GM10248 (cell line): ENCODE measurements at regions of chr2 and their contacts with region 1.

Region 1: GRCh38 chr2:11904029-11904428 is 157.6 kb downstream of the LPIN1 start:
- DNase-seq: peak; percentile 44
- CTCF ChIP-seq: no peak

Region 2: DNA sequence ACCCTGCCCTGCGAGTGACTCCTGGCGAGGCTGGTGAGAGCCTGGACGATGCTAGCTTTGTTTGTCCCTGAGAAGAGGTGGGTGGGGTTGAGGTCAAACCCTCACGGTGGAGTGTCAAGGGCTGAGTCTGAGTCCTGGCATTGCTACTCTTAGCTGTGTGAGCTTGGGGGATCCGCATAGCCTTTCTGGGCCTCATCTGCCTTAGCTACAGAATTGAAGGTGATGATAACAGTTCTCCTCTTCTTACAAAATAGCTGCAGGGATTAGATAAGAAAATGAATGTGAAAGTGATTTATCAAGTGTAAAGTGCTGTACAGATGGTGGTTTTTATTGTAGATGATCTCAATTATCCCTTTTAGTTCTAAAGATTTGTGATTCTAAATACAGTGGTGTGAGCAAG is 13.0 kb before region 1 on chr2:
- CTCF ChIA-PET with region 1: interaction called, 10 read pairs
- POLR2A ChIA-PET with region 1: no interaction called
- DNase-seq: no peak
- CTCF ChIP-seq: no peak

Region 3: GRCh38 chr2:11955314-11955713 is 51.3 kb after region 1 on chr2:
- CTCF ChIA-PET with region 1: no interaction called
- POLR2A ChIA-PET with region 1: no interaction called
- DNase-seq: no peak
- CTCF ChIP-seq: no peak